Activated T-helper 2 cell treated with anti-CD3 and anti-CD28 coated beads, Interferon-gamma antibody, Interleukin-2, Interleukin-4, amounts not matched to agents 10 μg/mL and 5 μg/mL and 100 μg/mL, durations not matched to agents 14 hours and 24 hours and 36 hours (primary cell): ENCODE measurements at regions of chr3 and their contacts with region 1.

Region 1: GRCh38 chr3:108489771-108490170 is 20.6 kb downstream of the MYH15 start:
- DNase-seq: no peak
- H3K4me3 Mint-ChIP-seq: no peak overlapping the region
- H3K27ac Mint-ChIP-seq: no peak overlapping the region
- H3K4me1 Mint-ChIP-seq: peaks cover 6% of the 10 kb centered on the region
- H3K27me3 Mint-ChIP-seq: peaks cover 13% of the 10 kb centered on the region

Region 2: GRCh38 chr3:108552267-108553159 is 62.7 kb after region 1 on chr3:
- intact Hi-C with region 1: loop called (anchors 1 kb)
- DNase-seq: no peak
- H3K4me3 Mint-ChIP-seq: no peak overlapping the region
- H3K27ac Mint-ChIP-seq: no peak overlapping the region
- H3K4me1 Mint-ChIP-seq: peaks cover 10% of the 10 kb centered on the region
- H3K27me3 Mint-ChIP-seq: no peaks in the 10 kb centered on the region

Region 3: GRCh38 chr3:108662130-108662738 is 172.5 kb after region 1 on chr3:
- intact Hi-C with region 1: loop called (anchors 10 kb)
- DNase-seq: peak; percentile 13
- H3K4me3 Mint-ChIP-seq: no peak overlapping the region
- H3K27ac Mint-ChIP-seq: no peak overlapping the region
- H3K4me1 Mint-ChIP-seq: peaks cover 24% of the 10 kb centered on the region
- H3K27me3 Mint-ChIP-seq: peaks cover 2% of the 10 kb centered on the region

Region 4: GRCh38 chr3:108818404-108818803 is 328.6 kb after region 1 on chr3:
- intact Hi-C with region 1: loop called (anchors 5 kb)
- DNase-seq: peak; percentile 54
- H3K4me3 Mint-ChIP-seq: no peak overlapping the region
- H3K27ac Mint-ChIP-seq: peak overlapping the region; percentile 26
- H3K4me1 Mint-ChIP-seq: peaks cover 30% of the 10 kb centered on the region
- H3K27me3 Mint-ChIP-seq: no peaks in the 10 kb centered on the region

Region 5: GRCh38 chr3:108914774-108915641 is 425.2 kb after region 1 on chr3:
- intact Hi-C with region 1: loop called (anchors 1 kb)
- DNase-seq: peak; percentile 57
- H3K4me3 Mint-ChIP-seq: peak overlapping the region; percentile 5
- H3K27ac Mint-ChIP-seq: no peak overlapping the region
- H3K4me1 Mint-ChIP-seq: peaks cover 16% of the 10 kb centered on the region
- H3K27me3 Mint-ChIP-seq: peaks cover 19% of the 10 kb centered on the region

Region 6: DNA sequence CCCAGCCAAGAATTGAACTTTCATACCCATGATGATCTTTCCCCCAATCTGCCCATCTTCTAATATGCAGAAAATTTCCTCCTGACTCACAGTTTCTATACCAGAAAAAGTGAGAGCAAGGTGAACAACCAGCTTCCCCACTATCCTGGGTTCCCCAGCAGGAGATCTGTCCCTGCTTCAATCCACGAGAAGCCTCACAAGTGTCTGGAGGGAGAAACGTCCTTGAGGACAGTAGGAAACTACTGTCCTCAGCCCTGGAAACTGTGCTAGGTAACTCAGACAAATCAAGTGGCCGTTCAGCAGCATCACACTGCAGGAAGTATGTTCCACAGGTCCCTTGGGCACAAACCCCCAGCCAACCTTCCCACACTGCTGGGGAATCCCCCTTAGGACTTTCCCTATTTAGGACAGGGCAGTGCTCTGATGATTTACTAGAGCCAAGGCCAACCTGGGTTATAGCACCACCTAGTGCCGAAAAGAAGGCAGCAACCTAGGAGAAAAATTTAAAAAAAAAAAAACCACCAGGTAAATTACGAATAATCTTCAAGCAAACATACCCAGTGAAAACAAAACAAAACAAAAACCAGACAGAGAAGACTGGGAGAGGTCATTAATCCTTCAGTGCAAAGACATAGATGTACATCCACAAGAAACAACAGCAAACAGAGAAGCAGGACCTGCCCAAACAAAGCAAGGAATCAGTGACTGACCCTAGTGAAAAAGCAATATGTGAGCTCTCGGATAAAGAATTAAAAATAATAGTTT is 592.2 kb after region 1 on chr3:
- intact Hi-C with region 1: loop called (anchors 2 kb)
- DNase-seq: no peak
- H3K4me3 Mint-ChIP-seq: no peak overlapping the region
- H3K27ac Mint-ChIP-seq: no peak overlapping the region
- H3K4me1 Mint-ChIP-seq: peaks cover 4% of the 10 kb centered on the region
- H3K27me3 Mint-ChIP-seq: peaks cover 16% of the 10 kb centered on the region